Activated CD4-positive, alpha-beta memory T cell treated with anti-CD3 and anti-CD28 coated beads for 36 hours (primary cell): ENCODE measurements at regions of chr14 and their contacts with region 1.

Region 1: DNA sequence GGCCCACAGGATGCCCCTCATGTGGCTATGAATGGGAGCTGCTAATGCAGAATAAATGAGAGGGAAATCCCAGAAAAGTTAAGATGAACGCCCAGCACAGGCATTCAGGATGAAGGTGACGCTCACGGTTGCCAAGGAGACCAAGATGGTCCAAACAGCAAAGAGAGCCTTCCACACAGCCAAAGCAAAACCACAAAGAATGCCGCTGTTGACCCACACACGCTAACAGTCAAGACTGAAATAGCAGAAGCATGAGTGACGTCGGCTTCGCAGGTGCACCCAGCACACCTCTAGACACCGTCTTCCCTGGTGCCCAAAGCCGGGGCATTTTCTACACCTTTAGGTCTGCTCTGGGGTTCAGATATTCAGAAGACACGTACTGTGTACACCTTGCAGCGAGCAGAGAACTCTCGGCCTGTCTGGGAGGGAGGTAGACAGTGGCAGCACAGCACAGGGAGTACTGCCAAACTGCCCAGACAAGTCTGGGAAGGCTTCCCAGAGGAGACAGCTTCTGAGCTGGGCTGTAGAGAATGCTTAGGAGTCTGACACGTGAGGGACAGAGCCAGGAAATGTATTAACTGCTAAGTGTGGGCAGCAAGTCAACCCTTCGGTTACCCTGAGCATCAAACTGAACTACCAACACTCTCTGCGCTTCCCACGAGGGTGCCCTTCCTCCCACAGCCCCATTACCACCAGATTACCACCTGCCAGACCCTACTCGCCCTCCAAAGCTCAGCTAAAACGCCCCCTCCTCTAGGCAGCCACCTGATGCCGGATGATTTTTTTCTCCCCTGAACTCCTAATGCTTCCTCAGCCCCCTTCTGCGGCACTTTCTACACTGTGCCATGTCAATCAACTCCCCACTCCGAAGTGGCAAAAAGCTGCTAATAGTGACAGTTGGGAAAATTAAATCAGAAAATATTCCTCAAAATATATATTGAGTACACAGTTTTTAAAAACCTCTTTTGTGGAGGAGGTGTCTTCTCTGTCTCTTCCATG is 50.1 kb downstream of the CCDC88C start:
- DNase-seq: peak; percentile 78
- H3K4me3 Mint-ChIP-seq: peak overlapping the region; percentile 59
- H3K27ac Mint-ChIP-seq: peak overlapping the region; percentile 80
- H3K4me1 Mint-ChIP-seq: peaks cover 86% of the 10 kb centered on the region
- H3K27me3 Mint-ChIP-seq: no peaks in the 10 kb centered on the region

Region 2: DNA sequence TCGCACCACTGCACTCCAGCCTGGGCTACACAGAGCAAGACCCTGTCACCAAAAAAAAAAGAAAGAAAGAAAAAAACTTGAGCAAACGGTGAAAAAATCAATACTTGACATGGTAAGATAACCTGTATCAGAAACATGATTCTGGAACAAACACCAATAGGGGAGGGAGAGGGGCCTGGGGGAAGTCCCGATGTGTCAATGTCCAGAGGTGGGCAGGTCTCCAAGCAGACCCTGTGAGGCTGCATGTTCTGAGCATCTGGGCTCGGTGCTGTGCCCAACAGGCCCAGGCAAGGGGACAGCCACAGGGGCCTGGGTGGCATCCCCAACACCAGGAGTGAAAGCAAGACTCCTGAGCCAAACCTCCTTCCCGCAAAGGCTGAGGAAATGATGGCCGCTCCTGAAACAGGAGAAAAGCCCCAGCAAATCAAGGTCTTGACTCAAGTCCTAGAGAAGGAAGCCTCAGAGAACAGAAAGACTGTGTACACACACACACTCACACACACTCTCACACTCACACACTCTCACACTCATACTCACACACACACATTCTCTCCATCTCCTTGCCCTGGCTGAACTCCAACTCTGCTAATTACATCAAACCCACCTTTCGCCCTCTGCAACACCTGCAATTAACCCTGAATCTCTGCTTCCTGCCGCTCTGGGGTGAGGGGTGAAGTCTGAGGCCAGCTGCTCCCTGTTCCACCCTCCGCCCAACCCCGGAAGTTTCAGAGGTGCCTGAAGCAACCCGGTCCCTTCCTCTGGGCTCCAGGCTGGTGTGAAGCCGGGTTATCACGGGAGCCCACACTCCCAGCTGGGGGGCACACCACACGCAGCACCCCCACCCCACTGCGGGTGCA is 29.7 kb after region 1 on chr14:
- CTCF ChIA-PET with region 1: interaction called, 4 read pairs
- POLR2A ChIA-PET with region 1: interaction called, 16 read pairs
- intact Hi-C with region 1: loop called (anchors 1 kb)
- DNase-seq: peak; percentile 84
- H3K4me3 Mint-ChIP-seq: peak overlapping the region; percentile 64
- H3K27ac Mint-ChIP-seq: peak overlapping the region; percentile 89
- H3K4me1 Mint-ChIP-seq: peaks cover 92% of the 10 kb centered on the region
- H3K27me3 Mint-ChIP-seq: no peaks in the 10 kb centered on the region